ENCODE measurements at regions of chr14 and their contacts with region 1.

Region 1: GRCh38 chr14:71855399-71856036 is 76.7 kb upstream of the RGS6 start:
- DNase-seq: peak; percentile 88
- H3K4me3 ChIP-seq: no peak overlapping the region
- H3K27ac ChIP-seq: no peak overlapping the region
- H3K4me1 ChIP-seq: peaks cover 16% of the 10 kb centered on the region
- H3K27me3 ChIP-seq: no peaks in the 10 kb centered on the region
- CTCF ChIP-seq: peak; percentile 94

Region 2: DNA sequence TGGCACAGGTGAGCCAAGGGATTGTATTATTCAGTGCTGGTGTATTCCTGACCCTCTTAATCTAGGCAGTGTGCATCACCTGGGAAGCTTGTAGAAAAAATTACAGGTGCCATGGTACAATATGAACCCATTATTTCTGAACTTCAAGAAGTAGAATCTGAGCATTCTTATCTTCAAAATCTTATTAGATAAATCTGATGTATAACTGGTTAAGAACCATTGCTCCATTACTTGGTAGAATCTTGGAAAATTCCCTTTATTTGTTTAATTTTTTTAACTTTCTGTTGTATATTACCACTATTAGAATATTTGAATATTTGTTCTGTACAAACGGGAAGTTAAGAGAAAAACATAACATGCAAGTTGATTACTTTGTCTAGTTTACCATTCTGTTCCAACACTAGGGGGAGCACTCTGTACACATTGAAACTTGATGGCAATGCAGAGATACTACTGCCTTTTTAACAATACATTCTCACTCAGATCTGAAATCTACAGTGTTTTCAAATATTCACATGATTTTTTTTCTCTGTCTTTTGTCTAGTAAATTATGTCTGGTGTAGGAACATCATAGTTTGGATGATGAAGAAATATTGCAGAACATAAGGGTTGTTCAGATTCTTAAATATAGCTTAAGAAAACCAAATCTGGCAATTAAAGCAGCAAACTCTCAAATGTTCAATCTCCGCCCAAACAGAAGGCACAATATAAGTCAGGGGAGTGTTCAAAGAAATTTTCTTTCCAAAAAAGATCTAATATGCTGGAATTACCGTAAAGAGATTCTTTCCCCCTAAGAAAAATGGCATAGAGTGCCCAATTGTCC is 751.6 kb before region 1 on chr14:
- CTCF ChIA-PET with region 1: interaction called, 3 read pairs
- POLR2A ChIA-PET with region 1: no interaction called
- intact Hi-C with region 1: loop called (anchors 10 kb)
- DNase-seq: peak; percentile 72
- H3K4me3 ChIP-seq: no peak overlapping the region
- H3K27ac ChIP-seq: peak overlapping the region; percentile 6
- H3K4me1 ChIP-seq: no peaks in the 10 kb centered on the region
- H3K27me3 ChIP-seq: no peaks in the 10 kb centered on the region
- CTCF ChIP-seq: peak; percentile 89

Region 3: GRCh38 chr14:71138448-71139293 is 716.8 kb before region 1 on chr14:
- CTCF ChIA-PET with region 1: interaction called, 3 read pairs
- POLR2A ChIA-PET with region 1: no interaction called
- intact Hi-C with region 1: loop called (anchors 2 kb)
- DNase-seq: peak; percentile 72
- H3K4me3 ChIP-seq: no peak overlapping the region
- H3K27ac ChIP-seq: no peak overlapping the region
- H3K4me1 ChIP-seq: peaks cover 10% of the 10 kb centered on the region
- H3K27me3 ChIP-seq: no peaks in the 10 kb centered on the region
- CTCF ChIP-seq: peak; percentile 97

Region 4: DNA sequence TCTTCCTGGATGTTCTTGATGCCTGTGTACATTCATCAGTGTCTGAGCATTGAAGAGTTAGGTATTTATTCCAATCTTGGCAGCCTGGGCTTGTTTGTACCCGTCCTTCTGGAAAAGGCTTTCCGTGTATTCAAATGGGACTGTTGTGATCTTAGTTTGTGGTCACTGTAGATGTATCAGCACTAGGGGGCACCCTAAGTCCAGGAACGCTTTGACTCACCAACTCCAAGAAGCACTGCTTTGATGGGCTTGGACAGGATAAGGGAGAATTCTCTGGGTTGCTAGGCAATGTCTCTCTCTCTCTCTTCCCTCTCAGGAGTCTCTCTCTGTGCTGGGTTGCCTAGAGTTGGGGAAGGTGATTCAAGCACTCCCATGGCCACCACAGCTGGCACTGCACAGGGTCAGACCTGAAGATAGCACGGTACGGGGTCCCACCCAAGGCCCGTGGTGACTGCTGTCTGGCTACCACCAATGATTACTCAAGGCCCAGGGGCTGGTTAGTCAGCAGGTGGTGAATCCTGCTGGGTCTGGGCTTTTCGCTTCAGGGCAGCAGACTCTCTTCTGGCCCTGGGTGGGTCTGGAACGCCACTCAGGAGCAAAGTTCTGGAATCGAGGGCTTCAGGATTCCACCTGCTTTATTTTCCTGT is 134.4 kb before region 1 on chr14:
- CTCF ChIA-PET with region 1: interaction called, 3 read pairs
- POLR2A ChIA-PET with region 1: no interaction called
- intact Hi-C with region 1: loop called (anchors 2 kb)
- DNase-seq: peak; percentile 86
- H3K4me3 ChIP-seq: no peak overlapping the region
- H3K27ac ChIP-seq: no peak overlapping the region
- H3K4me1 ChIP-seq: peaks cover 26% of the 10 kb centered on the region
- H3K27me3 ChIP-seq: no peaks in the 10 kb centered on the region
- CTCF ChIP-seq: peak; percentile 78

Region 5: DNA sequence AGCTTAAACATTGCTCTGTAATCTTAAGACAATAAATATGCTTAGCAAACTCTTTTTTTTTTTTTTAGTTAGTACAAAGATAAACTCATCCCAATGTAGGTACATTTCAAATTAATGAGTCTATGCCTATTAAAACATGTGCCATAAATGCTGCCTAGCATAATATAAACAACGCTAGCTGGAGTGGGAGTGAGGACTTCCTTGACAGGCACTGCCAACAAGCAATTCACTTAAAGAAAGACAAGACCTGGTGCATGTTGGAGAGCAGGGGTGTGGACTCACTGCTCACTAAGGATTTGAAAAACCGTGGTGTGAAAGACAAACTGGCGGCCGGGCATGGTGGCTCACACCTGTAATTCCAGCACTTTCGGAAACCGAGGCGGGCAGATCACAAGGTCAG is 110.4 kb before region 1 on chr14:
- CTCF ChIA-PET with region 1: no interaction called
- POLR2A ChIA-PET with region 1: no interaction called
- intact Hi-C with region 1: no loop called
- DNase-seq: no peak
- H3K4me3 ChIP-seq: no peak overlapping the region
- H3K27ac ChIP-seq: no peak overlapping the region
- H3K4me1 ChIP-seq: peaks cover 2% of the 10 kb centered on the region
- H3K27me3 ChIP-seq: no peaks in the 10 kb centered on the region
- CTCF ChIP-seq: no peak

Measured in A673 (cell line).